Adrenal gland (tissue), 19 donors: ENCODE measurements at regions of chr22 and their contacts with region 1.

Region 1: GRCh38 chr22:37817705-37818408 is 5.3 kb upstream of the GALR3 start:
- DNase-seq: peak; percentile 86 to 93 (median 90)
- H3K4me3 ChIP-seq: peak overlapping the region in 1 of 4 donors; percentile 56
- H3K27ac ChIP-seq: peak overlapping the region; percentile 46 to 92 (median 71)
- H3K4me1 ChIP-seq: peaks cover 15 to 18% of the 10 kb centered on the region in 2 donors
- H3K27me3 ChIP-seq: no peaks in the 10 kb centered on the region
- CTCF ChIP-seq: peak; percentile 87 to 98 (median 96)
- POLR2A ChIP-seq: no peak

Region 2: DNA sequence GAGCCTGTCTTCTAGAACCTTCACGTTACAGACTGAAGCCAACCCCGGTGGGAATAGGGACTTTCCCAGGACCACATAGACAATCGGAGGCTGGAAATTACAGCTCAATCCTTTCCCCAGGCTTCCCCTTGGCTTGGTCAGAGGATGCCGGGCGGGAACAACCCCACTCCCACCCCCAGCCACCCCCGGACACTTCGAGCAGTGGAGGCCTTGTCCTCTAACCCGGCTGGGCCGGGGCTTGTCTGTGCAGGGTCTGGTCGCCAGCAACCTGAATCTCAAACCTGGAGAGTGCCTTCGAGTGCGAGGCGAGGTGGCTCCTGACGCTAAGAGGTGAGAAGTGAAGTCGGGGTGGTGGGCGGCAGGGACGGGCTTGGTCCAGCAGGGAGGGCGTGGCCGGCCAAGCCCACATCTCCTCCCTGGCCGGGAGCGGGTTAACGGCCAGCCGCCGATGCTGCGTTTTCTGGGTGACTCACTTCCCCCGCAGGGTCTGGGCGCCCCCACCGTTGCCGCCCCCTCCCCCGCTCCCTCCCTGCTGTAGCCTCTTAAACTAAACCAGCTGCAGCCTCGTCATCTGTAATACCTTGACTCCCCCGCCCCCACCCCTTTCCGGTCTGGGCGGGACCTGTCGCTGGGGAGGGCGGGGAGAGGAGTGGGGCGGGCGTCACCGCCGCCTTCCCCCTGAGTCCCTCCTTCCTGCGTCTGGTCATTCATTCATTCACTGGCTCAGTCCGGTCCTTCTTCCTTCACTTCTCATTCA is 140.9 kb before region 1 on chr22:
- intact Hi-C with region 1: no loop called
- DNase-seq: peak; percentile 91 to 93 (median 91)
- H3K4me3 ChIP-seq: peak overlapping the region; percentile 27 to 79 (median 44)
- H3K27ac ChIP-seq: peak overlapping the region; percentile 85 to 98 (median 93)
- H3K4me1 ChIP-seq: peaks cover 20 to 32% of the 10 kb centered on the region in 2 donors
- H3K27me3 ChIP-seq: no peaks in the 10 kb centered on the region
- CTCF ChIP-seq: no peak
- POLR2A ChIP-seq: peak in 1 of 2 donors; percentile 49

Region 3: GRCh38 chr22:37862570-37863325 is 44.9 kb after region 1 on chr22:
- intact Hi-C with region 1: loop called (anchors 5 kb)
- DNase-seq: peak in 1 of 7 donors; percentile 40
- H3K4me3 ChIP-seq: no peak overlapping the region
- H3K27ac ChIP-seq: peak overlapping the region in 3 of 5 donors; percentile 33 to 67 (median 46)
- H3K4me1 ChIP-seq: peaks cover 4 to 14% of the 10 kb centered on the region in 2 donors
- H3K27me3 ChIP-seq: no peaks in the 10 kb centered on the region
- CTCF ChIP-seq: no peak
- POLR2A ChIP-seq: no peak

Region 4: DNA sequence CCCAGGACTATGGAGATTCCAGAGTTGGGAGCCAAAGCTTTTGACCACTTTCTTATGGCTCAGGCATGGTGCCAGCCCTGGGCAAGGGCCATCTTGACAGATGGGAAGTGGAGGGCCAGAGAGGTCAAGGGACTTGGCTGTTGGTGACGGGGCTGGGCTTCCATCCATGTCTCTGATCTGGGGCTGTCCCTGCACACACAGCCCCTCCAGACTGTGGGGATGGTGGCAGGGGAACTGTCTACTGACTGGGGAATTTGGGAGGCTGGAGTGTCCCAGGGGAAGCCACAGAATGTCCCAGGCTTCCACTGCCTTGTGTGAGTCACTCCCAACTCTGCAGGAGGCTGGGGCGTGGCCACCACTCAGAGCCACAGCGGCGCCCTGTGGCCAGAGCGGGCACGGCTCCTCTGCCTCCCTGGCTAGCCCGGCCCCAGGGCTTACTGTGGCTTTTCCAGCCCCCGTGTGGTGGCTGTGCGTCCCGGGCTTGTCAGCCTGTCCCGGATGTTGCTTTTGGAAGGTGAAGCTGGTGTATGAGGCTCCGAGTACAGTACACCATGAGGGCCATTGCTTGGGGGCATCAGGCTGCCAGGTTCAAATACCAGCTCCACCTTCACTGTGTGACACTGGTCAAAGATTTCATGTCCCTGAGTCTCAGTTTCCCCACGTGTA is 116.0 kb after region 1 on chr22:
- intact Hi-C with region 1: loop called in 1 of 2 experiments (anchors 10 kb)
- DNase-seq: peak; percentile 90 to 96 (median 94)
- H3K4me3 ChIP-seq: no peak overlapping the region
- H3K27ac ChIP-seq: peak overlapping the region in 4 of 5 donors; percentile 30 to 80 (median 51)
- H3K4me1 ChIP-seq: peaks cover 10 to 12% of the 10 kb centered on the region in 2 donors
- H3K27me3 ChIP-seq: no peaks in the 10 kb centered on the region
- CTCF ChIP-seq: peak; percentile 93 to 98 (median 97)
- POLR2A ChIP-seq: no peak

Region 5: DNA sequence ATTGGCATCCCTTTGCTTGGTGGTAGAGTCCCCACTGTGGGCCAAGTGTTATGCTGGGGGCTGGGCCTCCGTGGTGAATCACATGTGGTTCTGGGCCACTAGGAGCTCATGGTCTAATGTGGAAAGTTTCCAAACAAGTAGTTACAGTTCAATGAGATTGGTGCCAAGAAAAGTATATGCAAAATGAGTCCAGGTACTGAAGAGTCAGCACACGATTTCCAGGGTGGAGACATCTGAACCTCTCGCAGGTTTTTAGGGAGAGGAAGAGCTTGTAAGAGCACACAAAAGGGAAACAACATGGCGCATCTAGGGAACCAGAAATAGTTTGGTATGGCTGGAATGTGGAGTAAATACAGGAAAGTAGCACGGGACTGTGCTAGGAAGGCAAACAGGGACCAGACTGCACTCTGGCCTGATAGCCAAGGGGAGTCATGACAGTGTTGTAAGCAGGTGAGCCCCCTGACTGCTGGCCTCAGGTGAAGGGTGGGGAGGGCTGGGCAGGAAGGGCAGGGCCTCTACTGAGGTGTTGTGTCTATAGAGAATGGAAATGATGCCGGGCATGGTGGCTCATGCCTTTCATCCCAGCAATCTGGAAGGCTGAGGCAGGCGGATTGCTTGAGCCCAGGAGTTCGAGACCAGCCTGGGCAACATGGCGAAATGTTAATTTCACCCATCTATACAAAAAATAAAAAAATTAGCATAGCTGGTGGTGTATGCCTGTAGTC is 148.2 kb after region 1 on chr22:
- intact Hi-C with region 1: loop called in 1 of 2 experiments (anchors 10 kb)
- DNase-seq: no peak
- H3K4me3 ChIP-seq: no peak overlapping the region
- H3K27ac ChIP-seq: no peak overlapping the region
- H3K4me1 ChIP-seq: no peaks in the 10 kb centered on the region
- H3K27me3 ChIP-seq: no peaks in the 10 kb centered on the region
- CTCF ChIP-seq: no peak
- POLR2A ChIP-seq: no peak